ENCODE measurements at regions of chr12 and their contacts with region 1.

Region 1: GRCh38 chr12:102061560-102062418 is at the start of gene WASHC3:
- DNase-seq: peak; percentile 87 to 97 (median 94)
- ATAC-seq: peak; percentile 91
- H3K4me3 ChIP-seq: peak within 1 kb of the TSS; percentile 88
- H3K4me3 Mint-ChIP-seq: peak within 1 kb of the TSS; percentile 94
- H3K27ac ChIP-seq: peak within 1 kb of the TSS; percentile 89 to 94
- H3K27ac Mint-ChIP-seq: peak within 1 kb of the TSS; percentile 98
- H3K4me1 ChIP-seq: peaks cover 19% of the 10 kb centered on the region
- H3K4me1 Mint-ChIP-seq: peaks cover 31% of the 10 kb centered on the region
- H3K27me3 ChIP-seq: no peaks in the 10 kb centered on the region
- H3K27me3 Mint-ChIP-seq: no peaks in the 10 kb centered on the region
- CTCF ChIP-seq: no peak
- total RNA-seq, gene WASHC3: 16.9 to 20.3 TPM

Region 2: DNA sequence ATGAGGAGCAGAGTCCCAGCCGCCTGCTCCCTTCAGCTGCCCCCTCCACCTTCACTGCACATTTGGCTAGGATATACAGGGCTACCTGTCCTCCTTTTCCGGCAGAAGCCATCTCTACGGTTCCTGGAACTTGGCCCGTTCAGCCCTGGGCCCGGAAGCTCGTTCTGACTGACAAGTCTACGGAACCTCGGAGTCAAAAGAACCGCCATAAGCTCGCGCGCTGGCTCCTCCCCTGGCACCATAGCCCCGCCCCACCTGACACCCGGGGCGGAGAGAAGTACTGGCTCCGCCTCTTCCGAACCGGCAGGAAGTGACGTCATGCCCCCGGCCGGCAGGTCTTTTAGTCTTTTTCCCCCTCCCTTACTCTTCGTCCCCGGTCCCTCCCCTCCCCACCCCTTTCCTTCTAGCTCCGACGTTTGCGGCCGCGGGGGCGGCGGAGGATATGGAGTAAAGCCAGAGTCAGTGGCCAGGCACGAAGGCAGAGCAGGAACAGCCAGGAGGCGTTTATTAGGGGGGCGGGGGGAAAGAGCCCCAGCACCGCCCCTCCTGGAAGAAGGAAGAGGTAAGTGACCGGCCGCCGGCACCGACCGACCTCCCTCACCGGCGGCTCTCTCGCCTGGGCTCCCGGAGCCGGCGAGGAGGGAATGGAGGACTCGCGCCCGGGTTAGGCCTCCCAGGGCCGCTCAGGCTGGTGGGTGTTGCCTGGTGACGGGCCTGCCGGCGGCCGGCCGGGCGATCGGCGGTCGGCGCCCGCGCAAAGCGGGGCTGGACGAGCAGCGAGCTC is 1794.8 kb before region 1 on chr12 and contains the starts of genes DEPDC4 and SCYL2:
- CTCF ChIA-PET with region 1: no interaction called
- POLR2A ChIA-PET with region 1: no interaction called
- intact Hi-C with region 1: loop called in 1 of 2 experiments (anchors 5 kb)
- DNase-seq: peak; percentile 88 to 97 (median 93)
- ATAC-seq: peak; percentile 90
- H3K4me3 ChIP-seq: peak within 1 kb of the TSS; percentile 85
- H3K4me3 Mint-ChIP-seq: peak within 1 kb of the TSS; percentile 98
- H3K27ac ChIP-seq: peak within 1 kb of the TSS; percentile 72 to 86
- H3K27ac Mint-ChIP-seq: peak within 1 kb of the TSS; percentile 96
- H3K4me1 ChIP-seq: peaks cover 12% of the 10 kb centered on the region
- H3K4me1 Mint-ChIP-seq: peaks cover 42% of the 10 kb centered on the region
- H3K27me3 ChIP-seq: no peaks in the 10 kb centered on the region
- H3K27me3 Mint-ChIP-seq: no peaks in the 10 kb centered on the region
- CTCF ChIP-seq: no peak
- total RNA-seq, gene DEPDC4: 0.27 to 0.50 TPM
- total RNA-seq, gene SCYL2: 37.5 to 40.8 TPM

Region 3: DNA sequence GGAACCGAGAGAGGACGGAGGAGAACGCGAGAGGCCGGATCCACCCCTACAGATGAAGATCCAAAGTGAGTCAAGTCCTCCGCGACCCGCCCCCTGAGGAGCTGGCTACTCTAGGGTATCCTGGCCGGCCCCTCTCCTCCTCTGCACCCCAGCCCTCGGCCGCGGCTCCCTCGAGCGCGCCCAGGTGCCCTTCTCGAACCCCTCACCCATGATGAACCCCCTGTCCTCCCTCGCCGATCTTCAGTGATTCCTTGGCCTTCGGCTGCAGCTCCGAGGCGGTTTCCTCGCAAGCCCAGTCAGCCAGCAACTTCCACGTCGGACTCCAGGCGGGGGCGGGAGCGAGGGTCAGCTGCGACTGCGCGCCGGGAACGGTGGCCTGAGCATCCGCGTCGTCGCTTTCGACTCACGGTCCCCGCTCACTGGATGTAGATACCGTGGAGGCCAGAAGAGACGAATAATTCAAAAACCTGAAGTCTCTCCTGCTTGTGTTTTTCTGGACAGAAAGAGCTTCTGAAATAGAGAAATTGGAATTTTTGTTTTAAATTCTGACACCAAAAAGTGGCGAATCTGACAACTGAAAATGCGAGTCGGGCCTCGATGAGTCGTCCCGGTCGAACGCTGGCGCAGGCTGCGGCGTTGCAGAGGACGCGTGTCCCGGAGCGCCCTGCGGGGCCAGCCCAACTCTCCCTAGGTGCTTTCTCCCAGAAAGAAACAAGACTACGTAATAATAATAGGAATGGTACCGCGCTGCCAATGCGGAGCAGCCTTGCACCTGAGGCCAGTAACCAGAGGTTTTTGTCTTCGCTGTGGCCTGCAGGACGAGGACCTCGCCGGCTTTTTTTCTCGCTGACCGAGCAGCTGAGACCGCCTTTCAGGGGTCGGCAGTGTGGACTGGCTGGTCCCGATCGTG is 654.1 kb before region 1 on chr12 and contains the start of gene ARL1:
- CTCF ChIA-PET with region 1: no interaction called
- POLR2A ChIA-PET with region 1: interaction called, 5 read pairs
- intact Hi-C with region 1: loop called in 1 of 2 experiments (anchors 5 kb)
- DNase-seq: peak; percentile 51 to 88 (median 66)
- ATAC-seq: peak; percentile 76
- H3K4me3 ChIP-seq: peak within 1 kb of the TSS; percentile 98
- H3K4me3 Mint-ChIP-seq: peak within 1 kb of the TSS; percentile 98
- H3K27ac ChIP-seq: peak within 1 kb of the TSS; percentile 70 to 85
- H3K27ac Mint-ChIP-seq: peak within 1 kb of the TSS; percentile 86
- H3K4me1 ChIP-seq: peaks cover 20% of the 10 kb centered on the region
- H3K4me1 Mint-ChIP-seq: peaks cover 35% of the 10 kb centered on the region
- H3K27me3 ChIP-seq: no peaks in the 10 kb centered on the region
- H3K27me3 Mint-ChIP-seq: no peaks in the 10 kb centered on the region
- CTCF ChIP-seq: no peak
- total RNA-seq, gene ARL1: 21.8 to 23.5 TPM

Region 4: GRCh38 chr12:101823891-101824290 is 237.9 kb before region 1 on chr12:
- CTCF ChIA-PET with region 1: no interaction called
- POLR2A ChIA-PET with region 1: no interaction called
- intact Hi-C with region 1: loop called in 1 of 2 experiments (anchors 1 kb)
- DNase-seq: peak; percentile 40 to 90 (median 56)
- ATAC-seq: peak; percentile 99
- H3K4me3 ChIP-seq: no peak overlapping the region
- H3K4me3 Mint-ChIP-seq: peak overlapping the region; percentile 44
- H3K27ac ChIP-seq: no peak overlapping the region
- H3K27ac Mint-ChIP-seq: peak overlapping the region; percentile 83
- H3K4me1 ChIP-seq: peaks cover 47% of the 10 kb centered on the region
- H3K4me1 Mint-ChIP-seq: peaks cover 69% of the 10 kb centered on the region
- H3K27me3 ChIP-seq: no peaks in the 10 kb centered on the region
- H3K27me3 Mint-ChIP-seq: no peaks in the 10 kb centered on the region
- CTCF ChIP-seq: peak; percentile 42

Region 5: GRCh38 chr12:102119674-102120563 is 58.1 kb after region 1 on chr12 and contains the starts of genes NUP37 and PARPBP:
- CTCF ChIA-PET with region 1: interaction called, 3 read pairs
- POLR2A ChIA-PET with region 1: interaction called, 10 read pairs
- intact Hi-C with region 1: loop called (anchors 1 to 2 kb)
- DNase-seq: peak; percentile 82 to 95 (median 89)
- ATAC-seq: peak; percentile 94
- H3K4me3 ChIP-seq: peak within 1 kb of the TSS; percentile 86
- H3K4me3 Mint-ChIP-seq: peak within 1 kb of the TSS; percentile 93
- H3K27ac ChIP-seq: peak within 1 kb of the TSS; percentile 55 to 84
- H3K27ac Mint-ChIP-seq: peak within 1 kb of the TSS; percentile 92
- H3K4me1 ChIP-seq: peaks cover 17% of the 10 kb centered on the region
- H3K4me1 Mint-ChIP-seq: peaks cover 42% of the 10 kb centered on the region
- H3K27me3 ChIP-seq: no peaks in the 10 kb centered on the region
- H3K27me3 Mint-ChIP-seq: no peaks in the 10 kb centered on the region
- CTCF ChIP-seq: no peak
- total RNA-seq, gene NUP37: 9.4 to 9.6 TPM
- total RNA-seq, gene PARPBP: 1.1 to 1.5 TPM

Measured in CD4-positive, alpha-beta T cell (primary cell).